ENCODE measurements at regions of chr22 and their contacts with region 1.

Region 1: DNA sequence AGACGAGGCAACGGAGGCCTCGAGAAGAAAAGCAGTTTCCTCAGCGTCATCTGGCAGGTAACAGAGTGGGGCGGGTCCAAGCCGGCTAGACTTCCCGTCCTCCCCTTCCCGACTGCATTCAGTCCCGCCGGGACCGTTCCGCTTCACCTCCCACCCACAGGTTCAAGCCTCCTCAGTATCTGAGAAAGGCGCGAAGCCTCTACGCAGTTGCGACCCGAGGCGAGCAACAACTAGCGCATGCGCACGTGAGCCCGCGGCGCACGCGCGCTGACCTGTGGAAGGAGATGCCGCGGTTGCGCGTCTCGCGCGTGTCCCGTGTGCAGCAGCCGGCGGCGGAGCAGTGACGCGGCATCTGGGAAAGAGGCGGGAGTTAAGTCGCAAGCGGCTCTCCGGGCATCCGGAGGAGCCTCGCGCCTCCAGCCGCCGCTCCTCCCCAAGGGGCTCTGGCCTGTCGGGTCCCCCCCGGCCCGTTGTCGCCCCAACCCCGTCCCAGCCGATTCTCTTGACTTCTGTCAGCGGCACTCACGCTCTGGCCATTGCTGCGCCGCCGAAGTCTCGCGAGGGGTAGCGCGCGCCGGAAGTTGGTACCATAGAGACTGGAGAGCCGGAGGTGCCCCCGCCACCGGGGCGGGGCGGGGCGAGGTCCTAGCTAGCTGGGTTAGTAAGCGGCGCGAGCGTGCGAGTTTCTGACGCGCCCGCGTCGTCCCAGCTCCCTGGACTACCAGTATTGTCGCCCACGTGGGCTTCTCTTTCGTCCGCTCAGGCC is at the start of gene THAP7:
- DNase-seq: peak; percentile 92
- H3K4me3 ChIP-seq: peak within 1 kb of the TSS; percentile 85
- H3K27ac ChIP-seq: peak within 1 kb of the TSS; percentile 99
- H3K27me3 ChIP-seq: no peaks in the 10 kb centered on the region
- CTCF ChIP-seq: no peak
- polyA plus RNA-seq, gene THAP7: 12.5 and 15.1 TPM in 2 replicates

Region 2: DNA sequence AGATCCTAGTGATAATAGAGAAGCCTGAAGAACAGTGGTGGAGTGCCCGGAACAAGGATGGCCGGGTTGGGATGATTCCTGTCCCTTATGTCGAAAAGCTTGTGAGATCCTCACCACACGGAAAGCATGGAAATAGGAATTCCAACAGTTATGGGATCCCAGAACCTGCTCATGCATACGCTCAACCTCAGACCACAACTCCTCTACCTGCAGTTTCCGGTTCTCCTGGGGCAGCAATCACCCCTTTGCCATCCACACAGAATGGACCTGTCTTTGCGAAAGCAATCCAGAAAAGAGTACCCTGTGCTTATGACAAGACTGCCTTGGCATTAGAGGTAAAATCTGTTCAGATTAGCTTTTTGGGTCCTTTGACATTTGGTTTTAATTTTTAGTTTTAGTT is 67.8 kb before region 1 on chr22:
- CTCF ChIA-PET with region 1: no interaction called
- POLR2A ChIA-PET with region 1: interaction called, 10 read pairs
- DNase-seq: no peak
- H3K4me3 ChIP-seq: no peak overlapping the region
- H3K27ac ChIP-seq: no peak overlapping the region
- H3K27me3 ChIP-seq: no peaks in the 10 kb centered on the region
- CTCF ChIP-seq: no peak

Region 3: DNA sequence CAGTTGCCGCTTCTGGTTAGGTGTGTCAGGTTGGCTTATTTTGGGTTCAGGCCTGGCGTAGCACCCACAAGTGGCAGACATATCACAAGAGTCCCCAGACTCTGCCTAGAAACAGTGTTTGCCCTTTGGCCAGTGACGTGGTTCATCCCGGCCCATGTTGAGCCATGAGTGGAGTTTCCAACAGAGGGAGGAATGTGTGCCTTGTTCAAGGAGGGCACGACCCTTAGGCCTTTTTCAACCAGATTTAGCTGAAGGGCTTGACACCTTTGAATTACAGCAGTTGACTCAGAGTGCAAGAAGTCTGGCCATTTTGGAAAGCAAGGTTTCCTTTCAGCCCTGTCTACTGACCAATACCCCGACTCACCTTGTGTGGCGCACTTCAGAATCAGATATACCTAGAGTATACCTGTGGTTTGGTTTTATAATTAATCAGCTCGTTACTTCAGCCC is 49.8 kb before region 1 on chr22:
- CTCF ChIA-PET with region 1: no interaction called
- POLR2A ChIA-PET with region 1: no interaction called
- DNase-seq: no peak
- H3K4me3 ChIP-seq: no peak overlapping the region
- H3K27ac ChIP-seq: no peak overlapping the region
- H3K27me3 ChIP-seq: no peaks in the 10 kb centered on the region
- CTCF ChIP-seq: no peak

Measured in AG04450 (cell line).